Colonic mucosa (tissue), 4 donors: ENCODE measurements at regions of chrX and their contacts with region 1.

Region 1: GRCh38 chrX:131633285-131633917 is 89.5 kb downstream of the OR13H1 start:
- DNase-seq: peak; percentile 55
- H3K4me3 ChIP-seq: no peak overlapping the region
- H3K27ac ChIP-seq: no peak overlapping the region
- H3K4me1 ChIP-seq: no peaks in the 10 kb centered on the region
- H3K27me3 ChIP-seq: peaks cover 8% of the 10 kb centered on the region
- CTCF ChIP-seq: peak; percentile 82

Region 2: GRCh38 chrX:130975947-130976346 is 657.5 kb before region 1 on chrX:
- intact Hi-C with region 1: loop called (anchors 5 kb)
- DNase-seq: peak; percentile 42
- H3K4me3 ChIP-seq: no peak overlapping the region
- H3K27ac ChIP-seq: no peak overlapping the region
- H3K4me1 ChIP-seq: no peaks in the 10 kb centered on the region
- H3K27me3 ChIP-seq: peaks cover 4% of the 10 kb centered on the region
- CTCF ChIP-seq: peak; percentile 52

Region 3: DNA sequence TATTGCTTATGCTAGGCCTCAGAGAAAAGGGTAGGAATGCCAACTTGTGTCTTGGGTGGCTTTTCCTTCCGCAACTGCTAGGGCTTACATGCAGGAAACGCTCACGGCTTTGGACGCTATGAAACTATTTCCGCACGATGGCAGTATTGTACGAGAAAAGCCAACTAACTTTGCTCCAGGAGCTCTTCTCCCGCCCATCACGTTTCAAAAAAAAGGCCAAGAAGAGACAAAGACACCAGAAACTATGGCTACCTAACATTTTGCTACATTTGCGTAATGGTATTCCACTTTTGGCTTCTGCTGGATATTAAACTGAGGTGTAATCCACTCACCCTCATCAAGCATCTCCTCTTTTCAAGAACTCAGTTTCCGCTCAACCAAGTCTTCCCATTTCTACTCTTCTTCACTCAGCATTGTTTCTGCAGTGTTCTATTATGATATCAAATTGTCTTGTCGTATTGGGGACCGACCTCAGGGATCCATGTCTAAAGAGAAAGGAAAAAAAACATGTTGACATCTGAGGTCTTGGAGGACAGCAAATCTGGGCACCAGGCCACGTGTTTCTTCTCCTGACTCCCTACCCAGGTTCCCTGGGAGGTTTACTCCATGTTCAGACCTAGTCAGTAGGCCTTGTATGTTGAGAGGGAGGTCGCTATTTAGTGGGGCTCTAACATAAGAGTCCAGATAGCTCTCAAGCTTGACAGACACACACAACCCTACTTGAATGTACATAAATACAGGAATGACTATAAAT is 150.3 kb after region 1 on chrX:
- intact Hi-C with region 1: no loop called
- DNase-seq: peak; percentile 88
- H3K4me3 ChIP-seq: peak overlapping the region; percentile 2
- H3K27ac ChIP-seq: no peak overlapping the region
- H3K4me1 ChIP-seq: no peaks in the 10 kb centered on the region
- H3K27me3 ChIP-seq: no peaks in the 10 kb centered on the region
- CTCF ChIP-seq: peak; percentile 45